ENCODE measurements at regions of chr5 and their contacts with region 1.

Region 1: DNA sequence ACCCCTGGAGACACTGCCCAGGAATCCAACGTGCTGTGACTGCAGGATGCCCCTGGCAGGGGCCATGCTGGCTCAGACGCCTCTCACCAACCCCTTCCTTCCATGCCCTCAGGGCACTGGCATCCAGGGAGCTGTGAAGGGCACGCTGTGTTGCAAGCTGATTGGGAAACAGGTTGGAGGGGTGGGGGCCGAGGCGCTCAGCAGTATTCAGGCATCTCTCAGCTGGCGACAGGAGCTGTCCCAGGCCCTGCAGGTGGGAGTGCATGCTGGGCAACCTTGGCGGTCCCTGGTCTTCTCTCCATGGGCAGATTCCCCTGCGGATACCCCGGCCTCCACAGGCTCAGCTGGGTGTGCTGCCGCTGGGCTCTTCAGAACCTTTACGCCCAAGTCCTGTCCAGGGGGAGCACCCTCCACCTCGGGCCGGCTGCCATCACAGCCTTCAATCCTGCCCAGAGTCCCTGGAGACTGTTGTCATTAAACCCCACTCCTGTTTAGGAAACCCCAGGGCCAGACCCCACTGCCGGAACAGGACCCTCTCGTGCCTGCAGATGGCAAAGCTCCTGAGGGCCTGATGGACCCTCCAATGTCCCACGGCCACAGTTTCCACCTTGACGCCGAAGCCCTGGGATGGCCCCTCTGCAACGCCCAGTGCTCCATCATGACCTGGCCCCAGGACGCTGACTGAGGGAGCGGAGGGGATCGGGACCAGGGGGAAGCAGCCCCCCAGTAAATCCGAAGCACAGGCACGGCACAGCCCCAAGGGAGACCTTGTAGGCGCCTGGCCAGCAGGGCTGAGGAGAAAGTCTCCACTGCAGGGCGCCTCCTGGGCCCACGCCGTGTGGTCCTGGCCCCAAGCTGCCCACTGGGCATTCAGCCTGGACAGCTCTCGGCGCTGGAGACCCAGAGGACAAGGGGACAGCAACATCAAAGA is 9.3 kb downstream of the TPPP start:
- DNase-seq: peak in 3 of 5 donors; percentile 8 to 19 (median 14)
- H3K4me3 ChIP-seq: no peak overlapping the region
- H3K27ac ChIP-seq: no peak overlapping the region
- H3K4me1 ChIP-seq: no peaks in the 10 kb centered on the region
- H3K27me3 ChIP-seq: no peaks in the 10 kb centered on the region
- CTCF ChIP-seq: no peak
- EP300 ChIP-seq: no peak
- POLR2A ChIP-seq: no peak

Region 2: DNA sequence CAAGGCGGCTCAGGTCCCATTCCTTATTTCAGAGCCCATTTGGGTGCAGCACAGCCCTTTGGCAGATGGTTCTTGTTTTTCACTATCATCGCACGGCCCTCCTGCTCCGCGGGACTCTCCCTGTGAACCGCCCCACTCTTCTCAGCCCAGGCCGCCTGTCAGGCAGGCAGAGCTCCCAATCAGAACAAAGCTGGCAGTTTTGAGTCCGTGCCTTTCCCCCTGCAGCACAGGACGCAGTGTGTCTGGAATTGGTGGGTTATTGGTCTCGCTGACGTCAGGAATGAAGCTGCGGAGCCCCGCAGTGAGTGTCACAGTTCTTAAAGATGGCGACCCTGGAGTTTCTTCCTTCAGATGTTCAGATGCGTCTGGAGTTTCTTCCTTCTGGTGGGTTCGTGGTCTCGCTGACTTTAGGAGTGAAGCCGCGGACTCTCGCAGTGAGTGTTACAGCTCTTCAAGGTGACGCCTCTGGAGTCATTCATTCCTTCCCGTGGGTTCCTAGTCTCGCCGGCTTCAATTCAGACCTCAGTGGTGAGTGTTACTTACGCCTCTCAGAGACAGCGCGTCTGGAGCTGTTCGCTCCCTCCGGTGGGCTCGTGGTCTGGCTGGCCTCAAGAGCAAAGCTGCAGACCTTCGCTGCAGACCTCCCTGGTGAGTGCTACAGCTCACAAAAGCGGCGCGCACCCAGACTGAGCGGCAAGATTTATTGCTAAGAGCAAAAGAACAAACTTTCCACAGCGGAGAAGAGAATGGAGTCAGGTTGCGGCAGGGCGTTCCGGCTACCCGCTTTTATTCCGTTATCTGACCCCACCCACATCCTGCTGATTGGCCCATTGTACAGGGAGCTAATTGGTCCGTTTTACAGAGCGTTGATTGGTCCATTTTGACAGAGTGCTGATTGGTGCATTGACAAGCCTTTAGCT is 93.2 kb after region 1 on chr5:
- intact Hi-C with region 1: loop called in 1 of 4 experiments (anchors 2 kb)
- DNase-seq: peak in 2 of 5 donors; percentile 16 to 18
- H3K4me3 ChIP-seq: no peak overlapping the region
- H3K27ac ChIP-seq: no peak overlapping the region
- H3K4me1 ChIP-seq: no peaks in the 10 kb centered on the region
- H3K27me3 ChIP-seq: no peaks in the 10 kb centered on the region
- CTCF ChIP-seq: no peak
- EP300 ChIP-seq: no peak
- POLR2A ChIP-seq: no peak